ENCODE measurements at regions of chr11 and their contacts with region 1.

Region 1: DNA sequence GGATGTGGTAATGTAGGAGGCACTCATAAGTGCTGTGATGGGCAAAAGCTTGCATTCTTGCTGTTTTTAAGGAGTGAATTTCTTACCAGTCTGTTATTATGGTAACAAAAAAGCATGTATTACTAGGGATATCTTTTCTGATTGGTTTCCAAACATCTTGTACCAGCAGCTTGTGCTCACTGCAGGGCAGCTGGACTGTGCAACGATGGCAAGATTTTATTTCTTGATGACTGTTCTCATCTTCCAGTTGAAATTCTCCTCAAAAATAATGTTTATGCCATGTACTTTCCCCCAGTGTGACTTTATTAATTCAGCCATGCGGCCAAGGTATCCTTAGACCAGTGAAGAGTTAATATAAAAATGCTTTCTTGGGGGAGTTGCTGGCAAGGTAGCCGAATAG is 35.4 kb downstream of the EMSY start:
- DNase-seq: no peak
- ATAC-seq: no peak
- H3K4me3 ChIP-seq: no peak overlapping the region
- H3K27ac ChIP-seq: no peak overlapping the region
- H3K4me1 ChIP-seq: no peaks in the 10 kb centered on the region
- H3K27me3 ChIP-seq: no peaks in the 10 kb centered on the region
- CTCF ChIP-seq: no peak
- POLR2A ChIP-seq: no peak
- RAD21 ChIP-seq: no peak

Region 2: DNA sequence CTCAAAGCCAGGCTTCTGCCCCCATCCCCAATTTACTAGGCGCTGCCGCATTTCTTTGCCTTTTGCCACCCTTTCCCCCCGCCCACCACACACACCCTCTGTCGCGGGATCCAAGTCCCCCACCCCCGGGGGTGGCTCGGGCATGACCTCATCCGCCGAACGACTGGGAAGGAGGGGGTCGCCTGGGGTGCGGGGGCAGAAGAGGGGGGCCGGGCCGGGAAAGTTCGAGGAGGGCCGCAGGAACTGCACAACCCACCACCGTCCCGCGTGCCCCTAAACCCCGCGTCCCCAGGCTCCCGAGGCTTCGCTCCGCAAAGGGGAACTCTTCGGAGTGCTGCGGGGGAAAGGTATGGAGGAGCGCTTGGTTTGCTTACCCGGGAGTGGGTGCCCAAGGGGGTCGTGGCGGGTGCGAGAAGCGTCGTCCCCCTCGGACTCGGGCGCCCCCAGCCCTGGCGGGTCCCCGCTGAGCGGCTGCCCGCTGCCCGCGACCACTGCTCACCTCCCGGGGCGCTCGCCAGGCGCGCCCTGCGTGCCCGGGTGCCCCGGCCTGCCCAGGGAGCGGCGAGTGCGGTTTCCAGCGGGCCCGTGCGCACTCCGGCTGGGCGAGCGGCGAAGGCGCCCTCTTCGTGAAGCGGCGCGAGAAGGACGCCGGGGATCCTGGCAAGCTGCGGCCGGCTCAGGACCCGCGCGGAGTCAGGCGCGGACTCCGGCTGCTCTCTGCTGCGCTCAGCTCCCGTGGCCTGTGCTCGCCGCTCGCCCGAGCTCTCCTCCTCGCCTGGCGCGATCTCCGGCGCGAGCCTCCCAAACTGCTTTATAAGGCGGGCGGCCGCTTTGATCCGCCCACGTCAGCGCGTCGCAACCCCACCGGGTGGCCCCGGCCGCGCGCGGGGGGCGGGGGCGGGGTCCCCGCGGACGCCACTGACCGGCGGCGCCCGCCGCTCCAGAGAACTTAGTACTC is 270.0 kb before region 1 on chr11:
- CTCF ChIA-PET with region 1: no interaction called
- POLR2A ChIA-PET with region 1: no interaction called
- dilution Hi-C with region 1: no loop called
- in situ Hi-C with region 1: no loop called
- intact Hi-C with region 1: no loop called
- DNase-seq: peak; percentile 74
- ATAC-seq: peak; percentile 59
- H3K4me3 ChIP-seq: peak overlapping the region; percentile 34
- H3K27ac ChIP-seq: no peak overlapping the region
- H3K4me1 ChIP-seq: peaks cover 3% of the 10 kb centered on the region
- H3K27me3 ChIP-seq: peaks cover 73% of the 10 kb centered on the region
- CTCF ChIP-seq: no peak
- POLR2A ChIP-seq: no peak
- RAD21 ChIP-seq: no peak

Region 3: GRCh38 chr11:76506833-76507232 is 26.6 kb after region 1 on chr11:
- CTCF ChIA-PET with region 1: no interaction called
- POLR2A ChIA-PET with region 1: no interaction called
- dilution Hi-C with region 1: no loop called
- in situ Hi-C with region 1: no loop called
- intact Hi-C with region 1: loop called (anchors 2 kb)
- DNase-seq: no peak
- ATAC-seq: no peak
- H3K4me3 ChIP-seq: no peak overlapping the region
- H3K27ac ChIP-seq: no peak overlapping the region
- H3K4me1 ChIP-seq: peaks cover 3% of the 10 kb centered on the region
- H3K27me3 ChIP-seq: no peaks in the 10 kb centered on the region
- CTCF ChIP-seq: no peak
- POLR2A ChIP-seq: no peak
- RAD21 ChIP-seq: no peak

Region 4: DNA sequence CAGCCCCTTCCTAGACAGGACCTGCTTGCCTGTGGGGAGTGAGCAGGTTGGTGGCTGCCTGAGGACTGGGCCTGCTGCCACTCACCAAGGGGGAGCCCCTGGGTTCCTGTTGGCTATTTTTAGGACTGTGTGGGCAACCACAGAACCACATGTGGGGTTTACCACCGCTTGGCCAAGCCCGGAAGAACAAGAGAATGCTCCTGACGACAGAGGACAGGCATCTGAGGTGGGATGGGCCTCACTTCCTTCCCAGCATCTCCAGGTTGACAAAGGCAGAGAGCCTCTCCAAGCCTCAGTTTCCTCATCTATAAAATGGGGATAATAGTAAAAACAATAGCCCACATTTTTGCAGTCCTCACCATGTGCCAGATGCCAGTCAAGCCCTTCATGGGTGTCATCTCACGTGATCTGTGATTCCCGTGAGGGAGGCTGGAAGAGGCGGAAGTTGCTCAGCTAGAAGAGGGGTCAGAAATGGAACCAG is 146.7 kb after region 1 on chr11:
- CTCF ChIA-PET with region 1: no interaction called
- POLR2A ChIA-PET with region 1: no interaction called
- dilution Hi-C with region 1: no loop called
- in situ Hi-C with region 1: no loop called
- intact Hi-C with region 1: no loop called
- DNase-seq: peak; percentile 29
- ATAC-seq: no peak
- H3K4me3 ChIP-seq: no peak overlapping the region
- H3K27ac ChIP-seq: no peak overlapping the region
- H3K4me1 ChIP-seq: peaks cover 24% of the 10 kb centered on the region
- H3K27me3 ChIP-seq: no peaks in the 10 kb centered on the region
- CTCF ChIP-seq: no peak
- POLR2A ChIP-seq: no peak
- RAD21 ChIP-seq: no peak

Measured in IMR-90 (cell line).